Activated B cell treated with CpG ODN at 0.5 μM for 24 hours (primary cell): ENCODE measurements at regions of chr7 and their contacts with region 1.

Region 1: DNA sequence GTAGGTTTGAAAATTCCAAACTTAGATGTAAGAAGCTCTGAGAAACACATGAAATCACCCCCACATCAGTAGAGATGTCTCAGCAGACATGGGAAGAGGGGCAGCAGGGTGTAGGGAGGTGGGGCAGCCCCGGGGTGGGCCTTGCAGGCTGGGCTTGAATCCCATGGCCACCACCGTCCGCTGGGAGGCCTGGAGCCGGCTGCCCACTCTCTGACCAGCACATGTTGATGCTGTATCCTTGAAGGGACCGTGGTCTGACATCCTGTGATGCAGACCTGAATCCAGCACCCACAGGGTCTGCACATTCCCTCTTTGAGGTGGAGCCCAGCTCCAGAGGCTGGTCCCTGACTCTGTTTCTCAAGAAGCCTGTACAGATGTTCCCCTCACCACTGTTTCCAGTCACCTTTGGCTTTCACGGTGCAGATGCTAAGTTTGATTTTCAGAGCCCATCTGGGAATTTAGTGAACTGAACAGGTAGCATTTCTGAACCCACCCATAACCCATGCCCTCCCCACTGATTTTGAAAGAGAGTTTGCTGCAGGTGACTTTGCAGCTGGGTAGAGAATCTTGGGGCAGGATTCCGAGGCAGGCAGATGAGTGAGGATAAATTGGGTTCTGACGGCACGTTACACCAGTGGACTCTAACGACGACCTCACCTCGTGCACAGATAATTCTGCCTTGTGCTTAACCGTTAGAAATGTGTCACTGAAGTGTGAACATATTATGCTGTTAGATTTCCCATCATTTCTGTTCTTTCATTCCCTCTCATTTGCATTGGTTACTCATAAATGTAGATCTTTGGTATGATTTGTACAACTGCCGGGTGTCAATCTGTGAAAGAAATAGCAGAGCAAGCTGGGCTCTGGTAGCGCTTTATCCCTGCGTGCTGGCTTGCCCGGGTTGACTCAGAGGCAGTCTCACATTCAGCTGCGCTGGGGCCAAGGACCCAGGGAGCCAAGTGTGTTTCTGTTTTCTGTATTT is 45.7 kb downstream of the IKZF1 start:
- DNase-seq: no peak
- ATAC-seq: peak; percentile 76
- H3K4me3 Mint-ChIP-seq: peak overlapping the region; percentile 42
- H3K27ac Mint-ChIP-seq: peak overlapping the region; percentile 88
- H3K4me1 Mint-ChIP-seq: peaks cover 95% of the 10 kb centered on the region
- H3K27me3 Mint-ChIP-seq: no peaks in the 10 kb centered on the region
- CTCF ChIP-seq: no peak

Region 2: GRCh38 chr7:49762666-49763065 is 587.6 kb before region 1 on chr7:
- CTCF ChIA-PET with region 1: no interaction called
- POLR2A ChIA-PET with region 1: no interaction called
- intact Hi-C with region 1: no loop called
- DNase-seq: no peak
- ATAC-seq: no peak
- H3K4me3 Mint-ChIP-seq: no peak overlapping the region
- H3K27ac Mint-ChIP-seq: no peak overlapping the region
- H3K4me1 Mint-ChIP-seq: no peaks in the 10 kb centered on the region
- H3K27me3 Mint-ChIP-seq: peaks cover 2% of the 10 kb centered on the region
- CTCF ChIP-seq: no peak

Region 3: GRCh38 chr7:50156706-50157105 is 193.5 kb before region 1 on chr7:
- CTCF ChIA-PET with region 1: no interaction called
- POLR2A ChIA-PET with region 1: interaction called, 11 read pairs
- intact Hi-C with region 1: no loop called
- DNase-seq: no peak
- ATAC-seq: no peak
- H3K4me3 Mint-ChIP-seq: peak overlapping the region; percentile 35
- H3K27ac Mint-ChIP-seq: peak overlapping the region; percentile 86
- H3K4me1 Mint-ChIP-seq: peaks cover 50% of the 10 kb centered on the region
- H3K27me3 Mint-ChIP-seq: no peaks in the 10 kb centered on the region
- CTCF ChIP-seq: no peak

Region 4: GRCh38 chr7:50317221-50317678 is 33.0 kb before region 1 on chr7:
- CTCF ChIA-PET with region 1: interaction called, 3 read pairs
- POLR2A ChIA-PET with region 1: interaction called, 182 read pairs
- intact Hi-C with region 1: loop called (anchors 1 kb)
- DNase-seq: no peak
- ATAC-seq: peak; percentile 63
- H3K4me3 Mint-ChIP-seq: peak overlapping the region; percentile 74
- H3K27ac Mint-ChIP-seq: peak overlapping the region; percentile 96
- H3K4me1 Mint-ChIP-seq: peaks cover 96% of the 10 kb centered on the region
- H3K27me3 Mint-ChIP-seq: no peaks in the 10 kb centered on the region
- CTCF ChIP-seq: no peak

Region 5: GRCh38 chr7:50369143-50370026 is 19.1 kb after region 1 on chr7:
- CTCF ChIA-PET with region 1: interaction called, 8 read pairs
- POLR2A ChIA-PET with region 1: interaction called, 17 read pairs
- intact Hi-C with region 1: loop called (anchors 1 kb)
- DNase-seq: no peak
- ATAC-seq: peak; percentile 66
- H3K4me3 Mint-ChIP-seq: no peak overlapping the region
- H3K27ac Mint-ChIP-seq: peak overlapping the region; percentile 74
- H3K4me1 Mint-ChIP-seq: peaks cover 94% of the 10 kb centered on the region
- H3K27me3 Mint-ChIP-seq: no peaks in the 10 kb centered on the region
- CTCF ChIP-seq: peak; percentile 50